ENCODE measurements at regions of chr16 and their contacts with region 1.

Region 1: DNA sequence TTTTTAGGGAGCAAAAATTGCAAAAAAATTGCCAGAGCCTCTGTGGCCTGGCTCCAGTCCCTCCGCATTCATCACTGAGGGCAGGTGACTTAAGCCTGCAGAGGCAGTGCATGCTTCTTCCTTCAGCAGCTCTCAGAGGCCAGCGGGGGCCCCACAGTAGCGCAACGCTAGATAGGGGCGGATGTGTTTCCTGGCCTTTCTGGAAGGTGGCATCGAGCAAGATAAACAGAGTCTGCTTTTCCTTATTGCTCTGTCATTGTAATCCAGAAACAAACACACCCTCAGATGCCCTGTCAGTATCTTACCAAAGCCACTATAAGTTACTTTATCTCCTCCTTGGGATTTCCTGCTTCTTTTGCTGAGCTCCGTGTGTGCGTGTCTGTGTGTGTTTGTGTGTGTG is 75.5 kb upstream of the IRX6 start:
- DNase-seq: no peak
- H3K4me3 ChIP-seq: no peak overlapping the region
- CTCF ChIP-seq: no peak

Region 2: GRCh38 chr16:55169780-55170179 is 78.7 kb before region 1 on chr16:
- in situ Hi-C with region 1: loop called (anchors 5 kb)
- DNase-seq: no peak
- H3K4me3 ChIP-seq: no peak overlapping the region
- CTCF ChIP-seq: no peak

Region 3: GRCh38 chr16:55207693-55208428 is 40.6 kb before region 1 on chr16:
- in situ Hi-C with region 1: no loop called
- DNase-seq: no peak
- H3K4me3 ChIP-seq: no peak overlapping the region
- CTCF ChIP-seq: no peak

Measured in astrocyte of the cerebellum (primary cell).